Activated CD8-positive, alpha-beta T cell treated with anti-CD3 and anti-CD28 coated beads for 36 hours (primary cell): ENCODE measurements at regions of chr11 and their contacts with region 1.

Region 1: GRCh38 chr11:75532200-75533048 is 6.7 kb upstream of the GDPD5 start:
- DNase-seq: peak; percentile 89
- ATAC-seq: peak; percentile 81
- H3K4me3 Mint-ChIP-seq: no peak overlapping the region
- H3K27ac Mint-ChIP-seq: no peak overlapping the region
- H3K4me1 Mint-ChIP-seq: peaks cover 31% of the 10 kb centered on the region
- H3K27me3 Mint-ChIP-seq: no peaks in the 10 kb centered on the region
- CTCF ChIP-seq: peak; percentile 95

Region 2: GRCh38 chr11:75270896-75271418 is 261.5 kb before region 1 on chr11:
- CTCF ChIA-PET with region 1: interaction called, 9 read pairs
- POLR2A ChIA-PET with region 1: no interaction called
- intact Hi-C with region 1: loop called (anchors 10 kb)
- DNase-seq: peak; percentile 37
- ATAC-seq: no peak
- H3K4me3 Mint-ChIP-seq: no peak overlapping the region
- H3K27ac Mint-ChIP-seq: no peak overlapping the region
- H3K4me1 Mint-ChIP-seq: peaks cover 30% of the 10 kb centered on the region
- H3K27me3 Mint-ChIP-seq: no peaks in the 10 kb centered on the region
- CTCF ChIP-seq: peak; percentile 36

Region 3: GRCh38 chr11:75450826-75451821 is 81.3 kb before region 1 on chr11:
- CTCF ChIA-PET with region 1: interaction called, 130 read pairs
- POLR2A ChIA-PET with region 1: no interaction called
- intact Hi-C with region 1: no loop called
- DNase-seq: peak; percentile 60
- ATAC-seq: no peak
- H3K4me3 Mint-ChIP-seq: no peak overlapping the region
- H3K27ac Mint-ChIP-seq: no peak overlapping the region
- H3K4me1 Mint-ChIP-seq: no peaks in the 10 kb centered on the region
- H3K27me3 Mint-ChIP-seq: no peaks in the 10 kb centered on the region
- CTCF ChIP-seq: peak; percentile 80

Region 4: GRCh38 chr11:75547580-75548058 is 15.2 kb after region 1 on chr11:
- CTCF ChIA-PET with region 1: interaction called, 11 read pairs
- POLR2A ChIA-PET with region 1: interaction called, 3 read pairs
- intact Hi-C with region 1: no loop called
- DNase-seq: peak; percentile 66
- ATAC-seq: peak; percentile 73
- H3K4me3 Mint-ChIP-seq: no peak overlapping the region
- H3K27ac Mint-ChIP-seq: peak overlapping the region; percentile 23
- H3K4me1 Mint-ChIP-seq: peaks cover 4% of the 10 kb centered on the region
- H3K27me3 Mint-ChIP-seq: no peaks in the 10 kb centered on the region
- CTCF ChIP-seq: peak; percentile 93

Region 5: DNA sequence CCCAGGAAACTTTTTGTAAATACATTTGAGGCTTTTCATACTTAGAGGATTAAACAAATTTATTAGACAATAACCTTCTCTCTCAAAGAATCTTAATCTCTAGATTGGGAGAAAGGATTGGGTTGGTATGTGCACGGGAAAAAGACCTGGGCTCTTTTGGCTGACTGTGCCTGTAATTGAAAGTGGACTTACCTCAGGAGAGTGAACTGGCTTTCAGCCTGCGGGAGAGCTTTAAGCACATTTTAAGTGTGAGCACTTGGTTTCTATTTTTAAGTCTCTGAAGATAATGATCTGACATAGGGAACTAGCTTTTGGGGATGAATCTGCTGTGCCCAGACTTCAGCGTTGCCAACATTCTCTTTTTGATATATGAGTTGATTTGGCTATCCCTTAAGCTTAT is 318.4 kb after region 1 on chr11:
- CTCF ChIA-PET with region 1: no interaction called
- POLR2A ChIA-PET with region 1: no interaction called
- intact Hi-C with region 1: no loop called
- DNase-seq: no peak
- ATAC-seq: no peak
- H3K4me3 Mint-ChIP-seq: no peak overlapping the region
- H3K27ac Mint-ChIP-seq: no peak overlapping the region
- H3K4me1 Mint-ChIP-seq: peaks cover 17% of the 10 kb centered on the region
- H3K27me3 Mint-ChIP-seq: no peaks in the 10 kb centered on the region
- CTCF ChIP-seq: no peak